Sigmoid colon (tissue), 7 donors: ENCODE measurements at regions of chrX and their contacts with region 1.

Region 1: GRCh38 chrX:84729809-84730208 is 227.6 kb upstream of the HDX start:
- DNase-seq: peak; percentile 63
- H3K4me3 ChIP-seq: no peak overlapping the region
- H3K27ac ChIP-seq: no peak overlapping the region
- H3K4me1 ChIP-seq: no peaks in the 10 kb centered on the region
- H3K27me3 ChIP-seq: no peaks in the 10 kb centered on the region
- CTCF ChIP-seq: peak; percentile 12 to 57 (median 34)
- EP300 ChIP-seq: no peak
- POLR2A ChIP-seq: no peak

Region 2: GRCh38 chrX:85052636-85053343 is 323.0 kb after region 1 on chrX:
- intact Hi-C with region 1: loop called (anchors 5 kb)
- DNase-seq: no peak
- H3K4me3 ChIP-seq: no peak overlapping the region
- H3K27ac ChIP-seq: peak overlapping the region in 1 of 4 donors; percentile 53
- H3K4me1 ChIP-seq: peaks cover 0 to 11% (median 0%) of the 10 kb centered on the region in 4 donors
- H3K27me3 ChIP-seq: no peaks in the 10 kb centered on the region
- CTCF ChIP-seq: peak in 2 of 4 experiments; percentile 23 to 33
- EP300 ChIP-seq: no peak
- POLR2A ChIP-seq: no peak